GM12878 (cell line): ENCODE measurements at regions of chr14 and their contacts with region 1.

Region 1: DNA sequence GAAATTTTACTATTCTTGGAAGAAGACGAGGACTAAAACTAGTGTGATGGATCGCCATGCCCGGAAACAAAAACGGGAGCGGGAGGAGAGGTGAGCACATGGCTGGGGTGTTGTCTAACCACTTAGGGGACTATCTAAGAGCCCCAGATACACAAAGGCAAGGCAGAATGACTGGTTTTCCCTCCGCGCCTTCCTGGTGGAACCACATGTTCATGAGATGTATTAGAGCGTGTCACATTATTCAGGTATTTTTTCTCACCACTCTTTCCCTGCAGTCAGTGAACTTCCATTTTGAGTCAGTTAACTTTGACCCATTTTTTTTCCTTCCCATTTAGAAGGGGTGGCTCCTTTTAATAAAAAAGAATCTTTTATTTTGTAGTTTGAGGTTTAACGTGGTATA is 68.8 kb upstream of the TRAF3 start:
- DNase-seq: peak; percentile 88
- ATAC-seq: peak; percentile 93
- H3K4me3 ChIP-seq: no peak overlapping the region
- H3K27ac ChIP-seq: peak overlapping the region; percentile 45
- H3K4me1 ChIP-seq: peaks cover 9% of the 10 kb centered on the region
- H3K27me3 ChIP-seq: no peaks in the 10 kb centered on the region
- CTCF ChIP-seq: no peak
- EP300 ChIP-seq: peak in 1 of 2 experiments; percentile 24; a peak in 2 of 4 replicates
- POLR2A ChIP-seq: no peak
- RAD21 ChIP-seq: 0 out of 2 replicates have a peak, but pooled peaks have one; percentile 4

Region 2: DNA sequence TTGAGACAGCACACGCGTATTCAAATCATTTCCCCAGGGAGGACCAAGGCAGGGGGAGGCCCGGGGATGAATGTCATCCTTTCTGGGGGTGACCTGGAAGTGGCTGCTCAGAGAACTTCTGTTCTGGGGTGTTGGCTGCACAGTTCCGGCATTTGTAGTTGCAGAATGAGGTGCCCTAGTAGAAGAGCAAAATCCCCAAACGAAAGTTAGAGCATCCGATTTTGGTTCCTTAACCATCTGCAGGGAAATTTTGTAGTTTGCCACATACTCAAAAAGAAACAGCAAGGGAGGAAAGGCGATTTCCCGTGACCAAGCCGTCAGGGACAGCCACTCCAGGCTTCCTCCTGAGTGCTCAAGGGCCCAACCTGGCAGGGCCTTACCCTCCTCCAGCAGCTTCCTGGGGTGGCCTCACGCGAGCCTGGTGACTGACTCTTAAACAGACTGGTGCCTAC is 55.8 kb after region 1 on chr14:
- CTCF ChIA-PET with region 1: interaction called, 4 read pairs
- POLR2A ChIA-PET with region 1: no interaction called
- RAD21 ChIA-PET with region 1: interaction called, 4 read pairs
- SMC1A ChIA-PET with region 1: interaction called, 5 read pairs
- in situ Hi-C with region 1: no loop called
- intact Hi-C with region 1: loop called (anchors 2 kb)
- DNase-seq: peak; percentile 97
- ATAC-seq: peak; percentile 76
- H3K4me3 ChIP-seq: no peak overlapping the region
- H3K27ac ChIP-seq: peak overlapping the region; percentile 92
- H3K4me1 ChIP-seq: peaks cover 51% of the 10 kb centered on the region
- H3K27me3 ChIP-seq: no peaks in the 10 kb centered on the region
- CTCF ChIP-seq: no peak
- EP300 ChIP-seq: peak; percentile 51 to 73; a peak in 2 of 4 replicates
- POLR2A ChIP-seq: no peak
- RAD21 ChIP-seq: no peak